Vagina (tissue), 2 donors: ENCODE measurements at regions of chr2 and their contacts with region 1.

Region 1: GRCh38 chr2:183193904-183194303 is 69.7 kb downstream of the NUP35 start:
- DNase-seq: no peak
- H3K4me3 ChIP-seq: no peak overlapping the region
- H3K27ac ChIP-seq: no peak overlapping the region
- H3K4me1 ChIP-seq: no peaks in the 10 kb centered on the region
- H3K27me3 ChIP-seq: no peaks in the 10 kb centered on the region
- CTCF ChIP-seq: no peak
- POLR2A ChIP-seq: no peak

Region 2: GRCh38 chr2:185132501-185133041 is 1938.7 kb after region 1 on chr2:
- intact Hi-C with region 1: loop called (anchors 10 kb)
- DNase-seq: no peak
- H3K4me3 ChIP-seq: no peak overlapping the region
- H3K27ac ChIP-seq: no peak overlapping the region
- H3K4me1 ChIP-seq: no peaks in the 10 kb centered on the region
- H3K27me3 ChIP-seq: no peaks in the 10 kb centered on the region
- CTCF ChIP-seq: no peak
- POLR2A ChIP-seq: no peak